Heart left ventricle (tissue), 16 donors: ENCODE measurements at regions of chr1 and their contacts with region 1.

Region 1: DNA sequence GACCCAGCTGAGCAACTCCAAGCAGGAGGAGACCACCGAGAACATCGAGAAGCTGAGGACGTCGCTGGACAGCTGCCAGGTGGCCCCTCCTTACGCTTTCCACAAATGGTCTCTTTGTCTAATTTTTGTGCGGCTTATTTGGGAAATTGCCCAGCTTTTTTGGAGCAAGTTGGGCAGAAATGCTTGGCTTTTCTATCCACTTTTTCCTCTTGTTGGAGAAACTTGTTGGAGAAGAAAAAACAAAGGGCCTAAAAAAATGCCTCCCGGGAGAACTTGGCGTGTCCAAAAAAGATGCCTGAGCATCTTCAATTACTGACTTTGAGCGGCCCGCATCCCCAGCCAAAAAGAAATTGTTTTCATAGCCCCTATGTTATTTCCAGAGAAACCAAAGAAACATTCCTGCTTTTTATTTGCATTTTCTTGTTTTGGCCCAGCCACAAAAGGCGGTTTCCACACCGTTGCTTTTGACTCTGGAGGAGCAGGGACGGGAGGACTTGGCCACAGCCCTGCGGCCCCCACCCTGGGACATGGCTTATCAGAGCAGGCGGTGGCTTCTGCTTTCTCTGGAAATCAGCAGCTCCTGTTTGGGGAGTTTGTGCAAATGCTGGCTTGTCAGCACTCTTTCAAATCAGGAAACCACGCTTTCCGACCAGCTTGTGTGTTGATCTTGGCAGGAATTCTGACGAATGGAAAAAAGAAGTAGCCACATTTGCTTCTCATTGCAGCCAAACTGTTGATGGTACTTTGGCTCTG is 81.2 kb upstream of the EFHD2 start:
- DNase-seq: peak; percentile 64 to 83 (median 81)
- ATAC-seq: peak; percentile 72 to 90 (median 80)
- H3K4me3 ChIP-seq: peak overlapping the region in 2 of 12 donors; percentile 8 to 13
- H3K27ac ChIP-seq: peak overlapping the region in 10 of 12 donors; percentile 46 to 78 (median 58)
- H3K4me1 ChIP-seq: peaks cover 3 to 39% (median 24%) of the 10 kb centered on the region in 12 donors
- H3K27me3 ChIP-seq: no peaks in the 10 kb centered on the region
- CTCF ChIP-seq: no peak
- POLR2A ChIP-seq: no peak

Region 2: DNA sequence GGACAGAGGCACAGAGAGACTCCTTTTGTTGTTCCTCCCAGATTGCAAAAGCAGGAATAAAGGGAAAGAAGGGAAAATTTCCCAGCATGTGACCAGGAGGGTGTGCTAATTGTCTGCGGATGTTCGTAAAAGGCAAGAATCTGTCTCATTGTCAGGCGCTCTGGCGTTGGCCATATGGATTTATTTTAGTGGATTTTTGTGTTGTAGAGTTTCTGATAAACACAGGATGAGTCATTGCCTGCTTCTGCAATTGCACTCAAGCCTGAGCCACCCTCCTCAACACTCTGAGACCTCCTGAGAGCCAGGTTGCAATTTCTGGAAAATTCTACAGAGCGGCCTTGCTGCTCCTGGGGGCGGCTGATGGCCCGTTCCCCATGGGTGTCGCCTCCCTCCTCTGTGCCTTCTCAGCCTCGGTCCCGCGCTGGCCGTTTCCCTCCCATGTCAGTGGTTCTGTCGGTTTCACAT is 502.3 kb before region 1 on chr1:
- intact Hi-C with region 1: no loop called
- DNase-seq: no peak
- ATAC-seq: peak in 1 of 4 donors; percentile 43
- H3K4me3 ChIP-seq: no peak overlapping the region
- H3K27ac ChIP-seq: no peak overlapping the region
- H3K4me1 ChIP-seq: no peaks in the 10 kb centered on the region
- H3K27me3 ChIP-seq: no peaks in the 10 kb centered on the region
- CTCF ChIP-seq: no peak
- POLR2A ChIP-seq: no peak

Region 3: GRCh38 chr1:15358565-15359133 is 30.1 kb after region 1 on chr1:
- intact Hi-C with region 1: no loop called
- DNase-seq: no peak
- ATAC-seq: no peak
- H3K4me3 ChIP-seq: no peak overlapping the region
- H3K27ac ChIP-seq: no peak overlapping the region
- H3K4me1 ChIP-seq: no peaks in the 10 kb centered on the region
- H3K27me3 ChIP-seq: no peaks in the 10 kb centered on the region
- CTCF ChIP-seq: no peak
- POLR2A ChIP-seq: no peak

Region 4: GRCh38 chr1:15370781-15371520 is 42.4 kb after region 1 on chr1:
- intact Hi-C with region 1: loop called in 2 of 10 experiments (anchors 5 kb)
- DNase-seq: peak; percentile 47 to 79 (median 71)
- ATAC-seq: peak; percentile 70 to 93 (median 88)
- H3K4me3 ChIP-seq: no peak overlapping the region
- H3K27ac ChIP-seq: peak overlapping the region in 10 of 12 donors; percentile 26 to 62 (median 48)
- H3K4me1 ChIP-seq: peaks cover 0 to 17% (median 8%) of the 10 kb centered on the region in 12 donors
- H3K27me3 ChIP-seq: no peaks in the 10 kb centered on the region
- CTCF ChIP-seq: no peak
- POLR2A ChIP-seq: no peak

Region 5: GRCh38 chr1:15409388-15410222 is 81.1 kb after region 1 on chr1 and contains the start of gene EFHD2:
- intact Hi-C with region 1: loop called in 3 of 10 experiments (anchors 5 kb)
- DNase-seq: peak; percentile 87 to 92 (median 88)
- ATAC-seq: peak; percentile 79 to 93 (median 89)
- H3K4me3 ChIP-seq: peak within 1 kb of the TSS; percentile 66 to 98 (median 89)
- H3K27ac ChIP-seq: peak within 1 kb of the TSS in 11 of 12 donors; percentile 49 to 90 (median 74)
- H3K4me1 ChIP-seq: peaks cover 0 to 62% (median 31%) of the 10 kb centered on the region in 12 donors
- H3K27me3 ChIP-seq: no peaks in the 10 kb centered on the region
- CTCF ChIP-seq: peak in 1 of 12 donors; percentile 4
- POLR2A ChIP-seq: peak; percentile 52 to 92
- total RNA-seq, gene EFHD2: 11.2 to 52.2 (median 15.8) TPM

Region 6: DNA sequence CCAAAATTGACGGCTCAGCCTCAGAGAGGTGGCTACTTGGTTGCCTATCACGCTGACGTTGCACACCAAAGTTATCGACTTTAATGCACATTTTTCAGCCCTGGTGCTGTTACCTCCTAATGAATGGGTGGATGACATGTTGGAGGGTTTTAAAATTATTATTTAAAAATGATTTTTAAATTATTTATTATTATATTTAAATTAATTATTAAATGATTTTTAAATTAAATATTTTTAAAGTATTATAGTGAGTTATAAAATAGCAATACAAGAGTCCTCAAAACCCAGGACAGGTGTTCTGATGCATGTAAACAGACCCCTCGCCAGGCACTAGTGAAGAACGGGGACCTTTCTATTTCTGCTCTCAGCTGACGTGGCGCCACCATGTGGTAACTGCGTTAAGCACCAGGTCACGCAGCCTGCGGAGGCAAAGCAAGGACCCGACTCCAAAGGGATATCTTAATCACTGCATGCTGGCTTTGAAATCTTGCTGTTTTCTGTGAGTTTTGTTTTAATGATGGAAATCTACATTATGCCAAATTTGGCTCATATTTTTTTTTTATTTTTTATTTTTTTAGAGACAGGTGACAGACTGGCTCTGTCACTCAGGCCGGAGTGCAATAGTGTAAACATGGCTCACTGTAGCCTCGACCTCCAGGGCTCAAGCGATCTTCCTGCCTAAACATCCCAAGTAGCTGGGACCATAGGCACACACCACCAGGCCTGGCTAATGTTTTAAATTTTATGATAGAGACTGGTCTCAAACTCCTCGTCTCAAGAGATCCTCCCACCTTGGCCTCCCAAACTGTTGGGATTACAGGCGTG is 172.9 kb after region 1 on chr1:
- intact Hi-C with region 1: loop called in 8 of 10 experiments (anchors 5 to 10 kb)
- DNase-seq: peak; percentile 45 to 79 (median 56)
- ATAC-seq: peak in 3 of 4 donors; percentile 34 to 74 (median 56)
- H3K4me3 ChIP-seq: no peak overlapping the region
- H3K27ac ChIP-seq: no peak overlapping the region
- H3K4me1 ChIP-seq: no peaks in the 10 kb centered on the region
- H3K27me3 ChIP-seq: no peaks in the 10 kb centered on the region
- CTCF ChIP-seq: peak; percentile 44 to 75 (median 61)
- POLR2A ChIP-seq: no peak

Region 7: DNA sequence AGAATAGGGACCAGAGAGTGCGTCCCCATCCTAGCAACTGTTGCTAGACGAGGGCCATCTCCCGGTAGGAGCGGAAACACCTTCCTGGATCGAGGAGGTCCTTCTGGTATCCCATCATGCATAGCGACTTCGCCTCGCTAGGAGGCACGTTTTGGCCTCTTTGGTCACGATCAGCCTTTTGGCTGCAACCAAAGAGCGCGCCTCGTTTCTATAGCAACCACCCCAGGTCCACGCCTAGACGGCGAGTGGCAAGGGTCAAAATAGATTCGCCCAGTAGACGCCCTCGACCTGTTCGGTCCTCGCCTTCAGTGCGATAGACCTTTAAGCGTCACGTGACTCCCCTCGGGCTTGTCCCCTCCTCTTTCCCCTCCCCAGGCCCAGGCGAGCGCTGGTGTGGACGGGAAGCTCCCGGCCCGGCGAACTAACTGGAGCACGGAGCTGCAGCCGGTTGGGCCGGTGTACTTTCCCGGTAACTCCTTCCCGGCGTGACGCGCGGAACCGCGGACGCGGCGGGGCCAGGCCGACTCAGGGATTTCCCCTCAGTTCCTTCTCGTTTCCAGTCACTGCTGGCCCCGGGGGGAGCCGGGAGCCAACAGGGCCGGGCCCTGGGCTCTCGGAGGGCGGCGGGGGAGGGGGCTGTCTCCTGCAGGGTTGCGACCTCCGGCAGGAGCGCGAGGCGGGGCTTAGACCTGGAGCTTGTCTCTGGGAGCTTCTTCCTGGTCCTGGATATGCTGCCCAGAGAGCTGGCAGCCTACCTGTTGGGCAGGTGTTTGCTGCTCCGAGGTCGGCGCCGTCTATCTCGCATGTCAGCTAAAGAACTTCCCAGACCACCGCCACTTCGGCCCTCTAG is 198.2 kb after region 1 on chr1 and contains the start of gene DNAJC16:
- intact Hi-C with region 1: loop called in 2 of 10 experiments (anchors 5 to 10 kb)
- DNase-seq: peak; percentile 98 to 100 (median 100)
- ATAC-seq: peak; percentile 68 to 77 (median 73)
- H3K4me3 ChIP-seq: peak within 1 kb of the TSS; percentile 64 to 100 (median 76)
- H3K27ac ChIP-seq: peak within 1 kb of the TSS; percentile 68 to 99 (median 96)
- H3K4me1 ChIP-seq: peaks cover 8 to 43% (median 29%) of the 10 kb centered on the region in 12 donors
- H3K27me3 ChIP-seq: no peaks in the 10 kb centered on the region
- CTCF ChIP-seq: peak in 6 of 12 donors; percentile 6 to 45 (median 30)
- POLR2A ChIP-seq: peak in 1 of 2 donors; percentile 74
- total RNA-seq, gene DNAJC16: 11.9 to 22.8 (median 19.1) TPM